Posterior vena cava (tissue), 2 donors: ENCODE measurements at regions of chr17 and their contacts with region 1.

Region 1: GRCh38 chr17:17125136-17126084 is 80.7 kb downstream of the PLD6 start:
- DNase-seq: no peak

Region 2: DNA sequence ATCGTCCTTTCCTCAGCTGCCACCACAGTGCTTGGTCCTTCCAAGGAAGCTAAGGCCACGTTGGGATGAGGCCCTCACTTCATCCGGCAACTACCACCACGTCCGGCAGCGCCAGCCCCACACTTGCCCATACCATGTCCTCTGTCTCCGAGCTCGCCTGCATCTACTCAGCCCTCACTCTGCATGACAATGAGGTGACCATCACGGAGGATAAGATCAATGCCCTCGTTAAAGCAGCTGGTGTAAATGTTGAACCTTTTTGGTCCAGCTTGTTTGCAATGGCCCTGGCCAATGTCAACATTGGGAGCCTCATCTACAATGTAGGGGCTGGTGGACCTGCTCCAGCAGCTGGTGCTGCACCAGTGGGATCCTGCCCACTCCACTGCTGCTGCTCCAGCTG is 1080.9 kb before region 1 on chr17:
- intact Hi-C with region 1: no loop called
- DNase-seq: no peak

Region 3: DNA sequence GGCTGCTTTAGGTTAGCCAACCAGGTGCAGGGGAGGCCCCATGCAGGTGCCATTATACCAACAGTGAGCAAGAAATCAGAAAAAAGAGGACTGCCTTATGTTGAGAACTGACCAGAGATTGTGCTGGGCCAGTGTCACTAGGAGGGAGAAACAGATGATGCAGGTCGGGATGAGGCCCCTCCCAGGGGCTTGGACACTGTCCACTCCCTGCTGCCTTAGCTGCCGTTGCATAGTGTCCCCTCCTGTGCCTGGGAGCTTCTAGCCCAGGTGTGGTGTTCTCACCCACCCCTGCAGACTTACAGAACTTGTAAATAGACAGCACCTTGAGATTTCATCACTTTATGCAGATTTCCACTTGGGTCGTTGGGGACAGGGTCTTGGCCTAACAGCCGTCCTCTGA is 44.0 kb after region 1 on chr17:
- intact Hi-C with region 1: loop called in 1 of 2 experiments (anchors 1 kb)
- DNase-seq: no peak